ENCODE measurements at regions of chr11 and their contacts with region 1.

Region 1: DNA sequence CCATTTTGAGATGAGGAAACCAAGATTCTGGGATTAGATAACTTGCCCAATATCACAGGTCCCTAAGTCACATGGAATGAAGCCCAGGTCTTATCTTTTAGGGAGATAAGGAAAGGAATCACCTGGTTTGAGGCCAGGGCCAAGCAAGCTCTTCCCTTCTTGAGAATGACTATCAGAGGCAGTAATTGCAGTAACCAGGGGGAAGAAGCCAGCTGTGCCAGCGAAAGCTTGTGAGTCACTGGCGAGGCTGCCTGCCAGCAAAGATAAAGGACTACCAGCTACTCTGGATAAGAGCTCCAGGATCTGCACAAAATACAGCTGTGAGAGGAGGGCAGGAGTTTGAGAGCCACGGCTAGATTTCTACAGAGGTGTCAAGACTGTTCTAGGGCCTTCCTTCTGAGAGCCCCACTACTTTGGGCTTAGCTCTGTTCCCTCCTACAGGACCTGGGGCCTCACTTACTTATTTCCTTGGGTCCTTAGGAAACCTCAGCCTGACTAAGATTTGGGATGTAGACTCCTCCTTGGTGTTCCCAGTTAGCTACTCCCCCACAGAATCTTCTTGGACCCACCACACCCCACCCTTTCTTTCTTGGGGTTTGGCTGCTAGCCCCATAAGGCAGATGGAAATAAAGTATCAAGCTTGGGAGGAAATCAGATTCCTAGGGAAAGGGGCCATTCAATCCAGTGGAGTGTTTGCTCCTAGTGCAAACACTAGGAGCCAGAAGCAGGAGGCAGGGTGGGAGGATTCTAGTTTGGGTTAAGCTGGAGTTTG is 9.7 kb upstream of the CCKBR start:
- DNase-seq: peak; percentile 84 to 93 (median 90)
- ATAC-seq: peak; percentile 51 to 80 (median 62)
- H3K4me3 ChIP-seq: no peak overlapping the region
- H3K27ac ChIP-seq: peak overlapping the region; percentile 28 to 70 (median 49)
- H3K4me1 ChIP-seq: peaks cover 10 to 33% (median 31%) of the 10 kb centered on the region in 3 donors
- H3K27me3 ChIP-seq: no peaks in the 10 kb centered on the region
- CTCF ChIP-seq: no peak

Region 2: DNA sequence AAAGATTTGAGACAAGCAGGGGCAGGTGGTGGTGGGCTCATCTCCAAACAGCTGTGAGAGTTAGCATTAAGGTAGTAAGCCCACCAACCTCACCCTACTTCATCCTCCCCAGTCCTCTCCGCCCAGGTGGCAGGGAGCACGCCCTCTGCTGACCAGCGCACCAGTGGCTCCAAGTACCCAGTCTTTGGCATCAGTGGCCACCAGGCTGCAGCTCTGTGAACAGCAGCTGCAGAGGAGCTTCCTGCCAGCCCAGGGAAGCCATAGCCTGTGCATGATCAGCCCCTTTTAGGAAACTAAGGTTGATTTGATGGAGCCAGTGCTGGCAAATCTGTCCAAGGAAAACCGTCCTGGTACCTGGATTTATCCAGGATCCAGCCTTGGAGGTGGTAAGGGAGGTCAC is 48.6 kb after region 1 on chr11:
- intact Hi-C with region 1: loop called in 1 of 3 experiments (anchors 10 kb)
- DNase-seq: peak; percentile 62 to 88 (median 76)
- ATAC-seq: peak; percentile 97 to 100 (median 98)
- H3K4me3 ChIP-seq: no peak overlapping the region
- H3K27ac ChIP-seq: no peak overlapping the region
- H3K4me1 ChIP-seq: no peaks in the 10 kb centered on the region
- H3K27me3 ChIP-seq: no peaks in the 10 kb centered on the region
- CTCF ChIP-seq: peak; percentile 55 to 72 (median 66)